CD4-positive, alpha-beta T cell (primary cell): ENCODE measurements at regions of chr4 and their contacts with region 1.

Region 1: DNA sequence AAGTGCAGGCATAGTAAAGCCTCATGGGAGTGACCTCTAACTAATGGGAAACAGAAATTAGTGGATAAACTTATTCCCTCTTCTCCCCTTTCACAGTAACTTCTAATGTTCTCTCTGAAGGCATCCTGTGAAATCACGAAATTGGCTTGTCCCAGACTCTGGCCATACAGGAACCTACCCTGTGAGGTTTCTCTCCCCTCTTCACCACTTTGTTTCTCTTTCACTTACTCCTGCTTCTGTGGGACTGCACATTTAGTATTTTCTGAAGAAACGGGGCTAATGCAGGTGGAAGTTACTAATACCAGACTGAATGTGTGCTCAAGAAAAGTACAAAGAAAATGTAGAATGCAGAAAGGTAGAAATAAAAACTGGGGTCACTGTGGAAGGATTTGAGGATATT is 20.0 kb downstream of the ZNF330 start:
- DNase-seq: no peak
- ATAC-seq: no peak
- H3K4me3 ChIP-seq: no peak overlapping the region
- H3K4me3 Mint-ChIP-seq: no peak overlapping the region
- H3K27ac ChIP-seq: no peak overlapping the region
- H3K27ac Mint-ChIP-seq: no peak overlapping the region
- H3K4me1 ChIP-seq: no peaks in the 10 kb centered on the region
- H3K4me1 Mint-ChIP-seq: no peaks in the 10 kb centered on the region
- H3K27me3 ChIP-seq: no peaks in the 10 kb centered on the region
- H3K27me3 Mint-ChIP-seq: no peaks in the 10 kb centered on the region
- CTCF ChIP-seq: no peak

Region 2: DNA sequence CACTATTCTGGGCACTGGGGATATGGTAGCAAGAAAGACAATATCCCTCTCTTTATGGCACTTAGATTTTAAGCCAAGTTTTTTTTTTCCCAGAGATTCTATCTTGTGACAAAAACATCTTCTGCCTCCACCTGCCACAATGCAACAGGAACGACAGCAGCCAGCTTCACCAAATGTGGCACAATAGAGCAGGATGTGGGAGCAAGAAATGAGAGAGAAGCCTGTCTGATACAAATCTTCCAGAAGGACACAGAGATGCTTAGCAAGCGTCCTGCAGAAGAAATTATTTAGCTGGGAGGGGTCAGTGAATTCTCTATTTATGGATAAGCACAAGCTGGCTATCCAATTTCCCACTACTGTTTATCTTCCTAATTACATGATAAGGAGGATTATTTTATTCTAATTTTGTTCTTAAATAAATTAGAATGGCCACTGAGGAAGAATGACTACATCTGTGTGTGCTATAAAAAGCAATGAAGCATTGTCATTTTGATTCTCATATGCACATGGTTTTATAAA is 47.1 kb before region 1 on chr4:
- CTCF ChIA-PET with region 1: no interaction called
- POLR2A ChIA-PET with region 1: no interaction called
- intact Hi-C with region 1: loop called in 1 of 2 experiments (anchors 5 kb)
- DNase-seq: no peak
- ATAC-seq: no peak
- H3K4me3 ChIP-seq: no peak overlapping the region
- H3K4me3 Mint-ChIP-seq: no peak overlapping the region
- H3K27ac ChIP-seq: no peak overlapping the region
- H3K27ac Mint-ChIP-seq: no peak overlapping the region
- H3K4me1 ChIP-seq: no peaks in the 10 kb centered on the region
- H3K4me1 Mint-ChIP-seq: no peaks in the 10 kb centered on the region
- H3K27me3 ChIP-seq: peaks cover 7 to 8% of the 10 kb centered on the region in 2 experiments
- H3K27me3 Mint-ChIP-seq: peaks cover 37% of the 10 kb centered on the region
- CTCF ChIP-seq: no peak